ENCODE measurements at regions of chr2 and their contacts with region 1.

Region 1: GRCh38 chr2:57740891-57741290 is 305.7 kb upstream of the VRK2 start:
- DNase-seq: no peak
- H3K4me3 ChIP-seq: no peak overlapping the region
- H3K27ac ChIP-seq: no peak overlapping the region
- H3K4me1 ChIP-seq: no peaks in the 10 kb centered on the region
- H3K27me3 ChIP-seq: no peaks in the 10 kb centered on the region
- CTCF ChIP-seq: no peak
- EP300 ChIP-seq: no peak
- POLR2A ChIP-seq: no peak

Region 2: GRCh38 chr2:57809230-57809629 is 68.3 kb after region 1 on chr2:
- in situ Hi-C with region 1: no loop called
- intact Hi-C with region 1: loop called (anchors 2 kb)
- DNase-seq: no peak
- H3K4me3 ChIP-seq: no peak overlapping the region
- H3K27ac ChIP-seq: no peak overlapping the region
- H3K4me1 ChIP-seq: no peaks in the 10 kb centered on the region
- H3K27me3 ChIP-seq: no peaks in the 10 kb centered on the region
- CTCF ChIP-seq: no peak
- EP300 ChIP-seq: no peak
- POLR2A ChIP-seq: no peak

Measured in transverse colon (tissue), 4 donors.